Dorsolateral prefrontal cortex (tissue), 120 donors: ENCODE measurements at regions of chr12 and their contacts with region 1.

Region 1: GRCh38 chr12:133037207-133038005 is at the start of gene ZNF84:
- DNase-seq: peak; percentile 84 to 96 (median 94)
- H3K4me3 ChIP-seq: peak within 1 kb of the TSS; percentile 54 to 96 (median 87)
- H3K27ac ChIP-seq: peak within 1 kb of the TSS; percentile 77 to 97 (median 94)
- H3K27me3 ChIP-seq: no peaks in the 10 kb centered on the region
- CTCF ChIP-seq: peak in 12 of 56 donors; percentile 3 to 34 (median 19)
- total RNA-seq, gene ZNF84: 41.1 to 80.4 (median 61.2) TPM

Region 2: GRCh38 chr12:132700212-132700822 is 337.1 kb before region 1 on chr12:
- intact Hi-C with region 1: no loop called
- DNase-seq: no peak
- H3K4me3 ChIP-seq: no peak overlapping the region
- H3K27ac ChIP-seq: no peak overlapping the region
- H3K27me3 ChIP-seq: no peaks in the 10 kb centered on the region
- CTCF ChIP-seq: no peak

Region 3: DNA sequence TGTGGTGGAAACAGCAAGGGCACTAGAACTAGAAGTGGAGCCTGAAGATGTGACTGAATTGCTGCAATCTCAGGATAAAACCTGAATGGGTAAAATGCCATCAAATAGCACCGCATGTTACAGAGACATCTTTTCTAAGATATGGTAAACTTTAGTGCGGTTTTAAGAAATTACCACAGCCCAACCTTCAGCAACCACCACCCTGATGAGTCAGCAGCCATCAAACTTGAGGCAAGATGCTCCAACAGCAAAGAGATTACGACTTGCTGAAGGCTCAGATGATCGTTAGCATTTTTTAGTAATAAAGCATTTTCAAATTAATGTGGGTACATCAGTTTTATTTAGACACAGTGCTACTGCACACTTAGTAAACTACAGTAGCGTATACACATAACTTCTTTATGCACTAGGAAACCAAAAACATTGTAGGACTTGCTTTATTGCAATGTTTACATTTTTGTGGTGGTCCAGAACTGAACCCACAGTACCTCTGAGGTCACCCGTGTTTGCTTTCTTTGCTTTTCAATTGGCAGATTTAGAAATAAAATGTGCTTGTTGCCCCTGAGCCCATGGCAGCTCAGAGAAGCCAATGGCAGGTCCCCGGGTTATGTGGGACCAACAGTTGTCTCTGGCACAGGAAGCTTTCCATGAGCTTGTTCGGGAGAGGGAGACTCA is 224.6 kb before region 1 on chr12:
- intact Hi-C with region 1: no loop called
- DNase-seq: no peak
- H3K4me3 ChIP-seq: no peak overlapping the region
- H3K27ac ChIP-seq: no peak overlapping the region
- H3K27me3 ChIP-seq: no peaks in the 10 kb centered on the region
- CTCF ChIP-seq: no peak

Region 4: GRCh38 chr12:132828706-132829534 is 208.5 kb before region 1 on chr12 and contains the start of gene GOLGA3:
- intact Hi-C with region 1: loop called in 1 of 2 experiments (anchors 5 kb)
- DNase-seq: peak; percentile 89 to 95 (median 92)
- H3K4me3 ChIP-seq: peak within 1 kb of the TSS; percentile 51 to 100 (median 91)
- H3K27ac ChIP-seq: peak within 1 kb of the TSS; percentile 64 to 100 (median 98)
- H3K27me3 ChIP-seq: no peaks in the 10 kb centered on the region
- CTCF ChIP-seq: peak in 13 of 56 donors; percentile 6 to 50 (median 26)
- total RNA-seq, gene GOLGA3: 46.0 to 96.5 (median 63.7) TPM

Region 5: DNA sequence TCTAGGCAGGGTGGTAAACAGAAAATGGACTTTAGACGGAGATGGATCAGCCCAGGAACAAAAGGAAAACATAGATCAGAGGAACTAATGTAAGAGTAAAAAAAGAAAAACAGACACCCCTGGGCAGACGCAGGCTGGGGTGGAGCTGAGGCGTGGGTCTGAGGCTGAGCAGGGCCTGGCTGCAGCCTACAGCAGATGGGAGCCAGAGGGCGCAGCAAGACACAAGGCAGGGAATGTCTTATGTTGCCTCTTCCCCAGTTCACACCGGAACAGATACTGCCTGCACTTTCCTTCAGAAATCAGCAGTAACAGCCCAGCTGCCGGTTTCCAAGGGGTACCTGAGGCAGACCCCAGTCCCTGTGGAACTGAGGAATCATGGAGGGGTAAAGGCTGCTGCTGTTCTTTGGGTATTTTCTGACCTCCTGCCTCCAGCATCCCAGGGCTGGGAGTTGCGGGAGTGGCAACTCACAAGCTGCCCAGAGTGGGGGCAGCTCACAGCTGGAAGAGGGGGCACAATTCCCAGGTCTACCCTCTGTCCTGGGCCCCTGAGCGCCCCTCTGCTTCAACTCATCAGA is 91.1 kb before region 1 on chr12:
- intact Hi-C with region 1: no loop called
- DNase-seq: no peak
- H3K4me3 ChIP-seq: no peak overlapping the region
- H3K27ac ChIP-seq: no peak overlapping the region
- H3K27me3 ChIP-seq: no peaks in the 10 kb centered on the region
- CTCF ChIP-seq: no peak

Region 6: GRCh38 chr12:132986001-132986912 is 51.1 kb before region 1 on chr12 and contains the start of gene ZNF26:
- intact Hi-C with region 1: loop called (anchors 1 to 2 kb)
- DNase-seq: peak; percentile 83 to 94 (median 92)
- H3K4me3 ChIP-seq: peak within 1 kb of the TSS; percentile 73 to 100 (median 96)
- H3K27ac ChIP-seq: peak within 1 kb of the TSS; percentile 9 to 95 (median 85)
- H3K27me3 ChIP-seq: no peaks in the 10 kb centered on the region
- CTCF ChIP-seq: peak in 25 of 56 donors; percentile 9 to 50 (median 27)
- total RNA-seq, gene ZNF26: 9.4 to 26.4 (median 16.9) TPM

Region 7: GRCh38 chr12:133058203-133059125 is 21.1 kb after region 1 on chr12:
- intact Hi-C with region 1: no loop called
- DNase-seq: no peak
- H3K4me3 ChIP-seq: no peak overlapping the region
- H3K27ac ChIP-seq: no peak overlapping the region
- H3K27me3 ChIP-seq: no peaks in the 10 kb centered on the region
- CTCF ChIP-seq: no peak

Region 8: GRCh38 chr12:133080368-133081158 is 43.2 kb after region 1 on chr12 and contains the start of gene ZNF140:
- intact Hi-C with region 1: loop called (anchors 1 kb)
- DNase-seq: peak; percentile 96 to 99 (median 98)
- H3K4me3 ChIP-seq: peak within 1 kb of the TSS; percentile 72 to 100 (median 94)
- H3K27ac ChIP-seq: peak within 1 kb of the TSS; percentile 88 to 100 (median 97)
- H3K27me3 ChIP-seq: peaks cover 0 to 2% (median 0%) of the 10 kb centered on the region in 45 donors
- CTCF ChIP-seq: peak in 27 of 56 donors; percentile 5 to 52 (median 29)
- total RNA-seq, gene ZNF140: 9.3 to 21.3 (median 13.5) TPM